Endothelial cell of umbilical vein (primary cell): ENCODE measurements at regions of chr3 and their contacts with region 1.

Region 1: GRCh38 chr3:115325539-115325938 is 178.5 kb upstream of the ZBTB20 start:
- DNase-seq: peak; percentile 47
- H3K4me3 ChIP-seq: no peak overlapping the region
- H3K27ac ChIP-seq: no peak overlapping the region
- H3K4me1 ChIP-seq: peaks cover 18% of the 10 kb centered on the region
- H3K27me3 ChIP-seq: no peaks in the 10 kb centered on the region
- CTCF ChIP-seq: no peak
- POLR2A ChIP-seq: no peak

Region 2: DNA sequence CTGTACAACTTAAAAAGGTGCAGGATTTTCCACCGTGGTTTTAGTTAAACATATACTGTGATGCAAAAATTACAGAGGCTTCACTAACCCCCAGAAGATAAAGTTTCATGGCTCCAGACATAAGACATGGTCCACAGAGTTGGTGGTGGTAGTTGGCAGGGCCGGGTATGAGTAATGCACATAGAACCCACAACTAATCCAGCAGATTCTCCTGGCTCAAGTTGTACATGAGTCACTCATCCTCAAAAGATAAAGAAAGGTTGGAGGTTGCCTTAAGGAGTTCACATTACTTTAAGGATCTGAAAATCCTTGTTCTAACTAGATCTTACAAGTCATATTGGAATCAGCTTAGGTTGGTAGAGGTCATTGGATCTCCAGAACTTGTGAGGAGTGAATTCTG is 80.1 kb before region 1 on chr3:
- CTCF ChIA-PET with region 1: no interaction called
- POLR2A ChIA-PET with region 1: no interaction called
- dilution Hi-C with region 1: no loop called
- intact Hi-C with region 1: loop called (anchors 5 kb)
- DNase-seq: peak; percentile 85
- H3K4me3 ChIP-seq: no peak overlapping the region
- H3K27ac ChIP-seq: peak overlapping the region; percentile 54
- H3K4me1 ChIP-seq: peaks cover 39% of the 10 kb centered on the region
- H3K27me3 ChIP-seq: no peaks in the 10 kb centered on the region
- CTCF ChIP-seq: no peak
- POLR2A ChIP-seq: peak; percentile 26

Region 3: GRCh38 chr3:115272036-115272824 is 53.3 kb before region 1 on chr3:
- CTCF ChIA-PET with region 1: no interaction called
- POLR2A ChIA-PET with region 1: no interaction called
- dilution Hi-C with region 1: no loop called
- intact Hi-C with region 1: no loop called
- DNase-seq: peak; percentile 23
- H3K4me3 ChIP-seq: no peak overlapping the region
- H3K27ac ChIP-seq: no peak overlapping the region
- H3K4me1 ChIP-seq: no peaks in the 10 kb centered on the region
- H3K27me3 ChIP-seq: no peaks in the 10 kb centered on the region
- CTCF ChIP-seq: no peak
- POLR2A ChIP-seq: no peak

Region 4: GRCh38 chr3:115537669-115538068 is 212.1 kb after region 1 on chr3:
- CTCF ChIA-PET with region 1: no interaction called
- POLR2A ChIA-PET with region 1: no interaction called
- dilution Hi-C with region 1: no loop called
- intact Hi-C with region 1: no loop called
- DNase-seq: no peak
- H3K4me3 ChIP-seq: no peak overlapping the region
- H3K27ac ChIP-seq: no peak overlapping the region
- H3K4me1 ChIP-seq: no peaks in the 10 kb centered on the region
- H3K27me3 ChIP-seq: peaks cover 2% of the 10 kb centered on the region in 2 experiments
- CTCF ChIP-seq: no peak
- POLR2A ChIP-seq: no peak